A549 (cell line): ENCODE measurements at regions of chr19 and their contacts with region 1.

Region 1: DNA sequence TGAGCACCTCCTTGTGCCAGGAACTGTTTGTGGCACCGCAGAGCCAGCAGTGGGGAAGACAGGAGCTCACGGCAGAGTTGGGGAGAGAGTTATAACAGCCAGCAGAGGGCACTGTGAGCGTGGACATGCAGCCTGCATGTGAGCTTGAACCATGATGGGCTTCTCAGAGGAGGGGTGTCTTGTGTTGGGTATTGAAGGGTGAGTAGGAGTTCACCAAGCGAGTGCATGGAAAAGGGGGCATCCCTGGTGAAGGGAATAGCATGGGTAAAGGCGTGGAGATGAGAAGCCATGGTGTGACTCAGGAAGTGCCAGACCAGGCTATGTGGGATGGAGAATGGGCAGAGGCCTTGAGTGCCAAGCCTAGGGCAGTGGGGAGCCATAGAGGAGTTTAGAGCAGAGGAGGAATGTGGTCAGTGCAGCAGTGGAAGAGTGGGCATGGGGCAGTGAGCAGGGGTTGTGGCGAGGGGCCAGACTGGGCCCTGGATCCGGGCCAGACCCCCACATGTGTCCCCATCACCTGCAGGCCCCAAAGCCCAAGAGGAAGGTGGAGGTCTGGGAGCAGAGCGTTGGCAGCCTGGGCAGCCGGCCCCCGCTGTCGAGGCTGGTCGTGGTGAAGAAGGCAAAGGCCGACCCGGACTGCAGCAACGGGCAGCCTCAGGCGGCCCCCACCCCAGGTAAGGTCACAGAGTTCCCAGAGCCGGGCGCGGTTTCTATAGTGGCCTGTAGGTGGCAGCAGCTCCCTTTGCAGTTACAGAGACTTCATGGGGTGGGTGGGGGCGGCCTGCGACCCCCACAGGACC is 11.8 kb upstream of the SHD start:
- DNase-seq: peak; percentile 61 to 82
- ATAC-seq: peak; percentile 86 to 88
- H3K4me3 ChIP-seq: no peak overlapping the region
- H3K27ac ChIP-seq: no peak overlapping the region
- H3K4me1 ChIP-seq: no peaks in the 10 kb centered on the region
- CTCF ChIP-seq: peak; percentile 50
- EP300 ChIP-seq: no peak
- POLR2A ChIP-seq: no peak
- RAD21 ChIP-seq: peak; percentile 67 to 70

Region 2: DNA sequence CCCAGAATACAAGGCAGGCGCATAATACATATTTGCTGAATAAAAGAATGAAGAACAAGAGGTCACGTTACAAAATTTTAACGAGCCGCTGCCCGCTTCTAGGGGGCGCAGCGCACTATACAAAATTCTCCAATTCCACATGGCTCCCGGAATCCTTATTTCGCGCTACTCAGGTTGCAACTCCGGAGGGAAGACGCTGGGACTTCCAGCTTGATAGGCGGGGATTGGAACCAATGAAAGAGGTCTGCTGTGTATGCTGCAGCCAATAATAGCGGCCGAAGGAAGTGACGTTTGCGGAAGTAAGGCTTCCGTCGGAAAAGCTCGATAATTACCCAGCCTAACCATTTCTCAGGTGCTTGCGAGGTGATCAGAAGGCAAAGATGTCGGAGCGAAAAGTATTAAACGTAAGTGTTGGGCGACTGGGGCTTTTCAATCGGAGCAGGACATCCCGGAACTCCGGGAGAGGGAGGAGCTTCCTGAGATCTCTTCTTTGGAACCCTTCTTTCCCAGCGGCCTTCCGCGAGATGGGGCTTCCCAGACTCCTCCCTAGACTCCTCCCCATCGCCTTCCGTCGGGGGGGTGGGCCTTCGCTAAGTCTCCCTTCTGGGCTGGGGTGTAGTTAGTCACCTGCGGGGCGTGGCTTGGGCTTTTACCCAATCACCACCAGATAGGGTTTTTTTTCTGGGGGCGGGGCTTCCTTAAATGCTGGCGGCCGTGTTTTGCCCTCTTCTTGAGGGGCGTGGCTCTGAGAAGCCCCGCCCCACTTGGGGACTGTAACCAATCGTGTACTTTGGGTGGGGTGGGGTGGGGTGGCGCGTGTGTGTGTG is 20.3 kb before region 1 on chr19 and contains the start of gene YJU2:
- CTCF ChIA-PET with region 1: interaction called, 10 read pairs
- POLR2A ChIA-PET with region 1: interaction called, 3 read pairs
- DNase-seq: peak; percentile 97 to 98
- ATAC-seq: peak; percentile 95 to 97
- H3K4me3 ChIP-seq: peak within 1 kb of the TSS; percentile 48
- H3K27ac ChIP-seq: peak within 1 kb of the TSS; percentile 83 to 88
- H3K4me1 ChIP-seq: peaks cover 4% of the 10 kb centered on the region; the same call in 1 of the 3 replicates
- CTCF ChIP-seq: peak; percentile 47
- EP300 ChIP-seq: no peak
- POLR2A ChIP-seq: 0 out of 2 replicates have a peak, but pooled peaks have one; percentile 17
- RAD21 ChIP-seq: peak; percentile 25; a peak in 3 of 5 replicates
- polyA plus RNA-seq, gene YJU2: 11.4 and 12.3 TPM in 2 replicates

Region 3: DNA sequence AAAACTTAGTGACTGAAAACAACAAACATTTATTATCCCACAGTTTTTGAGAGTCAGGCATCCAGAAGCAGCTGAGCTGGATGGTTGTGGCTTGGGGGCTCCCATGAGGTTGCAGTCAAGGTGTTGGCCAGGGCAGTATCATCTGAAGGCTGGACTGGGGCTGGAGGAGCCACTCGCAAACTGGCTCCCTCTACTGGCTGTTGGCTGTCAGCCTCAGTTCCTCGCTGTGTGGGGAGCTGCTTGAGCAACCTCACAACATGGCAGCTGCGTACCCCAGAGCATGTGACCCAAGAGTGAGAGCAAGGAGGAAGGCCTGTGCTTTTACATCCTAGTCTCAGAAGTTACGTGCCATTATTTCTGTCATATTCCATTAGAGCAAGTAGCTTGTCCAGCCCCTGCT is 10.7 kb before region 1 on chr19:
- CTCF ChIA-PET with region 1: interaction called, 17 read pairs
- POLR2A ChIA-PET with region 1: no interaction called
- DNase-seq: peak in 1 of 2 experiments; percentile 39
- ATAC-seq: no peak
- H3K4me3 ChIP-seq: no peak overlapping the region
- H3K27ac ChIP-seq: no peak overlapping the region
- H3K4me1 ChIP-seq: no peaks in the 10 kb centered on the region
- CTCF ChIP-seq: no peak
- EP300 ChIP-seq: no peak
- POLR2A ChIP-seq: no peak
- RAD21 ChIP-seq: no peak

Region 4: GRCh38 chr19:4278419-4279266 is 11.3 kb after region 1 on chr19 and contains the start of gene SHD:
- CTCF ChIA-PET with region 1: interaction called, 35 read pairs
- POLR2A ChIA-PET with region 1: no interaction called
- DNase-seq: no peak
- ATAC-seq: peak; percentile 36 to 48; a peak in 2 of 6 replicates
- H3K4me3 ChIP-seq: peak within 1 kb of the TSS; percentile 47
- H3K27ac ChIP-seq: peak within 1 kb of the TSS in 1 of 2 experiments; percentile 67; a peak in 3 of 6 replicates
- H3K4me1 ChIP-seq: peaks cover 2% of the 10 kb centered on the region; the same call in 1 of the 3 replicates
- CTCF ChIP-seq: no peak
- EP300 ChIP-seq: no peak
- POLR2A ChIP-seq: no peak
- RAD21 ChIP-seq: no peak
- polyA plus RNA-seq, gene SHD: 0.08 and 0.29 TPM in 2 replicates

Region 5: DNA sequence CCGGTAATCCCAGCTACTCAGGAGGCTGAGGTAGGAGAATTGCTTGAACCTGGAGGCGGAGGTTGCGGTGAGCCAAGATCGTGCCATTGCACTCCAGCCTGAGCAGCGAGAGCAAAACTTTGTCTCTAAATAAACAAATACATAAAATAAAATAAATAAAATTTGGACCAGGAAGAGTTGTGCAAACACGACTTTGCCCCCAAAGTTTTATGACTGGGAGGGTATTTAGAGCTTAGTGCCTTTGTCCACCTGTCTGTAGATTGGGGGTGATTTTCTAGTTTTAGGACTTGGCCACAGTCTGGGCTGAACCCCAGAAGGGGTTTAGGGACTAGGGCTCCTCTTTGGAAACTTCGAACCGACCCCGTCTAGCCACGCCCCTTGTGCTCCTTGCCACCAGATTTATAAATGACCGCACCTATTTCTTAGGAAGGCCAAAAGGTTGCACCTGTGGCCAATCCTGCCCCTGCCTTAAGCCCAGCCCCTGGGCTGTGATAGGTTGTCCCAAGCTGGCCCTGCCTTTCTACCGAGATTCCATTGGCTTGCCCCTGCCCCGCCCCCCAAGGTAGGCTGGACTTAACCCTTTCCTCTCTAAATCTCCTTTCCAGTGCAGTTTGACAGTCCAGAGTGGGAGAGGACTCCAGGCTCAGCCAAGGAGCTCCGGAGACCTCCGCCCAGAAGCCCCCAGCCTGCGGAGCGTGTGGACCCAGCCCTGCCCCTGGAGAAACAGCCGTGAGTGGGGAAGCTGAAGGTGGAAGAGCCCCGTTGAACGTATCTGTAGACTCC is 17.1 kb after region 1 on chr19:
- CTCF ChIA-PET with region 1: interaction called, 13 read pairs
- POLR2A ChIA-PET with region 1: no interaction called
- DNase-seq: peak; percentile 84 to 93
- ATAC-seq: peak; percentile 94 to 96
- H3K4me3 ChIP-seq: peak overlapping the region; percentile 17; the same call in 1 of the 3 replicates
- H3K27ac ChIP-seq: no peak overlapping the region
- H3K4me1 ChIP-seq: peaks cover 2% of the 10 kb centered on the region; the same call in 1 of the 3 replicates
- CTCF ChIP-seq: no peak
- EP300 ChIP-seq: no peak
- POLR2A ChIP-seq: no peak
- RAD21 ChIP-seq: no peak

Region 6: GRCh38 chr19:4352701-4353121 is 85.4 kb after region 1 on chr19:
- CTCF ChIA-PET with region 1: interaction called, 47 read pairs
- POLR2A ChIA-PET with region 1: no interaction called
- DNase-seq: peak; percentile 51 to 66
- ATAC-seq: peak in 1 of 2 experiments; percentile 74; a peak in 4 of 6 replicates
- H3K4me3 ChIP-seq: no peak overlapping the region
- H3K27ac ChIP-seq: no peak overlapping the region
- H3K4me1 ChIP-seq: no peaks in the 10 kb centered on the region
- CTCF ChIP-seq: peak; percentile 66
- EP300 ChIP-seq: no peak
- POLR2A ChIP-seq: no peak
- RAD21 ChIP-seq: peak; percentile 35 to 39; a peak in 3 of 5 replicates

Region 7: DNA sequence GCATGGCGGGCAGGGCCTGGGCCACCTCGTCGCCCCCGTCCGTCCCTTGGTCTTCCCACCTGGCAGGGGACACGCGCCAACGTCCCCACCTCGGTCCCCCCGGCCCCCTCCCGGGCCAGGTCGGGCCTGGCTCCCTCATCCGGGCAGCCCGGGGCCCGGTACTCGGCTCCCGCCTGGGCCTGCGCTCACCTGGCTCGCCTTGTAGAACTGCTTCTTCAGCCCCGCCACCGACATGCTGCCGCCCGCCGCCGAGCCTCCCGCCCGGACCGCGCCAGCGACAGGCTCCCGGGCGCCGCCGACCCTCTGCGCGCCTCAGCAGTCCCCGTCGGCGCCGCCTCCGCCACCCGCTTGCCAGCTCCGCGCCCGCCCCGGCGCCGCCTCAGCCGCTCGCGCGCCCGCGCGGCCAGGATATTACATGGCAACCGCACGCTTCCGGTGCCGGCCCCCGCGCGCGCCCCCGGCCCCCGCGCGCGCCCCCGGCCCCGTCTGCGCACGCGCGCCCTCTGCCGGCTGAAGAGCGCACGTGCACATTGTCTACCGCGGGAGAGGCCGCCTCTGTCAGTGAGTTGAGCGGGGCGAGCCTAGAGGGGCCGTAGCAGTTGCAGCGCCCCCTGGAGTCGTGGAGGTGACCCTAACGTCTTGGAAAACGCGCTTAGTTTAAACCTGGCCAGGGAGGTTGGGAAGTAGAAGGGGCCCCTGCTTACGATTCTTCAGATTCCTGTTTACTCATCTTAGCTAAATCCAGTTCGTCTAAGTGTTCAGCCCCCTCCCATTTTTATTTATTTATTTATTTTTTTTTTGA is 133.0 kb after region 1 on chr19 and contains the start of gene SH3GL1:
- CTCF ChIA-PET with region 1: interaction called, 10 read pairs
- POLR2A ChIA-PET with region 1: no interaction called
- DNase-seq: peak; percentile 69 to 94
- ATAC-seq: peak; percentile 68 to 78
- H3K4me3 ChIP-seq: peak within 1 kb of the TSS; percentile 77
- H3K27ac ChIP-seq: peak within 1 kb of the TSS; percentile 88 to 99
- H3K4me1 ChIP-seq: peaks cover 26% of the 10 kb centered on the region
- CTCF ChIP-seq: peak; percentile 99
- EP300 ChIP-seq: no peak
- POLR2A ChIP-seq: peak; percentile 53
- RAD21 ChIP-seq: peak; percentile 39 to 68; a peak in 4 of 5 replicates
- polyA plus RNA-seq, gene SH3GL1: 18.2 and 20.1 TPM in 2 replicates